ENCODE measurements at regions of chr20 and their contacts with region 1.

Region 1: GRCh38 chr20:49768204-49769047 is 44.2 kb upstream of the SLC9A8 start:
- DNase-seq: peak; percentile 91 to 100
- H3K4me3 ChIP-seq: no peak overlapping the region
- H3K27ac ChIP-seq: peak overlapping the region; percentile 96
- H3K4me1 ChIP-seq: peaks cover 93% of the 10 kb centered on the region
- H3K27me3 ChIP-seq: no peaks in the 10 kb centered on the region
- CTCF ChIP-seq: no peak

Region 2: GRCh38 chr20:49516916-49517789 is 251.3 kb before region 1 on chr20:
- CTCF ChIA-PET with region 1: no interaction called
- POLR2A ChIA-PET with region 1: no interaction called
- intact Hi-C with region 1: no loop called
- DNase-seq: peak in 1 of 2 experiments; percentile 35
- H3K4me3 ChIP-seq: no peak overlapping the region
- H3K27ac ChIP-seq: no peak overlapping the region
- H3K4me1 ChIP-seq: peaks cover 8% of the 10 kb centered on the region
- H3K27me3 ChIP-seq: peaks cover 14% of the 10 kb centered on the region; the same call in 1 of the 2 replicates
- CTCF ChIP-seq: no peak

Region 3: GRCh38 chr20:49699200-49699992 is 69.0 kb before region 1 on chr20:
- CTCF ChIA-PET with region 1: no interaction called
- POLR2A ChIA-PET with region 1: interaction called, 3 read pairs
- intact Hi-C with region 1: loop called (anchors 1 kb)
- DNase-seq: peak in 1 of 2 experiments; percentile 81
- H3K4me3 ChIP-seq: peak overlapping the region; percentile 19; the same call in 1 of the 2 replicates
- H3K27ac ChIP-seq: peak overlapping the region; percentile 99
- H3K4me1 ChIP-seq: peaks cover 97% of the 10 kb centered on the region
- H3K27me3 ChIP-seq: no peaks in the 10 kb centered on the region
- CTCF ChIP-seq: no peak

Region 4: DNA sequence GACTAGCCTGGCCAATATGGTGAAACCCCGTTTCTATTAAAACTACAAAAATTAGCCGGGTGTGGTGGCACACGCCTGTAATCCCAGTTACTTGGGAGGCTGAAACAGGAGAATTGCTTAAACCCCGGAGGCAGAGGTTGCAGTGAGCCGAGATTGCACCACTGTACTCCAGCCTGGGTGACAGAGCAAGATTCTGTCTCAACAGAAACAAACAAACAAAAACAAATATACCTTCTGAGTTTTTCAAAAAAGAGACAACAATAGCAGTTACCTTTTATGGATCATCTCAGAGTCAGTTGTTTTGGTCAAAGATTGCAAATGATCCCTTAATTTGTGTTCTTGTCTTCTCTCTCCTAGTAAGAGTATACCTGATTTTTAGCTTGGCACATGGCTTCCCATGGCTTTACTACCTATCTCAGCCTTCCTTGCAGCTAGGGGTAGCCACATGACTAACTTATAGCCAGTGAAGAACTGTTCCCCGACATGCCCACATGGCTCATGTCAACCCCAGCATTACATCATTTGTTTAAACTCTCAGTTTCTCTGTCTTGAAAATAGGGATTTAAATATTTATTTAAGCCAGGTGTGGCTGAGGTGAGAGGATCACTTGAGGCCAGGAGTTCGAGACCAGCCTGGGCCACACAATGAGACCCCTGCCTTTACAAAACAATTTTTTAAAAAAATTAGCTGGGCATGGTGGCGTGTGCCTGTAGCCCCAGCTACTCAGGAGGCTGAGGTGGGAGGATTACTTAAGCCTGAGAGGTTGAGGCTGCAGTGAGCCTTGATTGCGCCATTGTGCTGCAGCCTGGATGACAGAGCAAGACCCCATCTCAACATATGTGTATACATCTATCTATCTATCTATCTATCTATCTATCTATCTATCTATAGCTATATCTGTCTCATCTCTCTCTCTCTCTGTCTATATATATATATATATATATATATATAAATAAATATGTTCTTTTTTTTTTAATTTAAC is 19.2 kb after region 1 on chr20:
- CTCF ChIA-PET with region 1: no interaction called
- POLR2A ChIA-PET with region 1: no interaction called
- intact Hi-C with region 1: loop called (anchors 2 kb)
- DNase-seq: no peak
- H3K4me3 ChIP-seq: no peak overlapping the region
- H3K27ac ChIP-seq: peak overlapping the region; percentile 97
- H3K4me1 ChIP-seq: peaks cover 60% of the 10 kb centered on the region
- H3K27me3 ChIP-seq: no peaks in the 10 kb centered on the region
- CTCF ChIP-seq: no peak

Region 5: DNA sequence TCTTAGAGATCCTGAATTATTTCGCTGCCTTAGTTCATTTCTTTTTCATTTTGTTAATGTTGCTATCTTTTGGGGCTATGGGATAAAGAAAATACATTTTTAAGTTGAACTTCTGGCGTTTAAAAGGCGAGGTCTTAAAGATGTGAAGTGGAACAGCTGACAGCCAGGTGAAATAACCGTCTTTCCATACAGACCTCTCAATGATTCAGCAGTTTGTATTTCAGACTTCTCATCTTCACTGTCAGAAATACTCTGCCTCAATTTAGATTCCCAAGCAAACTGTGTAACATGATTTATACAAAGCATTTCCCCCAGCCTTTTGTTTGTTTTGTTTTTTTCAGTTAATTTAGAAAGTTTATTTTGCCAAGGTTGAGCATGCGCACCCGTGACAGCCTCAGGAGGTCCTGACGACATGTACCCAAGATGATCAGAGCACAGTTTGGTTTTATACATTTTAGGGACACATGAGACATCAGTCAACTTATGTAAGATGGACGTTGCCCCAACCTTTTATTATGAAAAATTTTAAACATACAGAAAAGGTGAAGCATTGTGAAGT is 84.2 kb after region 1 on chr20:
- CTCF ChIA-PET with region 1: no interaction called
- POLR2A ChIA-PET with region 1: interaction called, 26 read pairs
- intact Hi-C with region 1: no loop called
- DNase-seq: no peak
- H3K4me3 ChIP-seq: no peak overlapping the region
- H3K27ac ChIP-seq: peak overlapping the region; percentile 10; the same call in 1 of the 2 replicates
- H3K4me1 ChIP-seq: 0 out of 2 replicates have a peak, but pooled peaks cover 7% of the 10 kb centered on the region
- H3K27me3 ChIP-seq: no peaks in the 10 kb centered on the region
- CTCF ChIP-seq: no peak

Region 6: DNA sequence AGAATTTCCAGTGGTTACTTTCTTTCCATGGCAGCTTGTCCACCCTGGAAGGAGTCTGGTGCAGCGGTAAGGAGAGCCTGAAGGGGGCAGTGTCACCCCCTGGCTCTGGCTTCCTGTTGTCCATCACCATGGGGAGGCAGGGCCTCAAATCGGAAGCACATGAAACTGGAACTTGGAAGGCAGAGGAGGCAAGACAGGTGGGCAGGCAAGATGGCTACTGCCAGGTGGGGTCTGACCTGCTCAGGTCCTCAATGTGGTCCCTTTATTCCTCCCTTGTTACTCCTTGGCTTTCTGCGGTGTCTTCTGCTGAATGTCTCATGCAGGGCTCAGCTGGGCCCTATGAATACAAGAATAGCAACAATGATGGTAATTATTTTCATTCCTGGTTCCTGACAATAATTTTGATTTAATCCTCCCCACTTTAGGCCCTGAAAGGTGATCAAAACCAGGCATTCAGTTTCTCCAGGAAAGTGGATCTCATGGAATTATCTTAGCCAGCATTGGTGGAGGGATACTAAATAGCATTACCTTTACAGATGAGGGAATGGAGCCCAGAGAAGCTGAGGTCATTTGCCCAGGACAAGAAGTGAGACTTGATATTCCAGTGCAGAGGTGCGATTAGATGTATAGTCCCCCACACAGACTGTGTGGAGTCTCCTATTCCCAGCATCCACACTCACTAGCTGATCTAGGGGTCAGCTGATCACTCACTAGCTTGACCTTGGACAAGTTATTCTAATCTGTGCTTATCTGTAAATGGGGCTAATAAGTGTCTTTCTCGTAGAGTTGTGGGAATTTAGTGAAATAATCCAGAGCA is 196.7 kb after region 1 on chr20:
- CTCF ChIA-PET with region 1: no interaction called
- POLR2A ChIA-PET with region 1: no interaction called
- intact Hi-C with region 1: no loop called
- DNase-seq: peak; percentile 52 to 54
- H3K4me3 ChIP-seq: no peak overlapping the region
- H3K27ac ChIP-seq: no peak overlapping the region
- H3K4me1 ChIP-seq: peaks cover 25% of the 10 kb centered on the region
- H3K27me3 ChIP-seq: no peaks in the 10 kb centered on the region
- CTCF ChIP-seq: peak; percentile 76

Region 7: DNA sequence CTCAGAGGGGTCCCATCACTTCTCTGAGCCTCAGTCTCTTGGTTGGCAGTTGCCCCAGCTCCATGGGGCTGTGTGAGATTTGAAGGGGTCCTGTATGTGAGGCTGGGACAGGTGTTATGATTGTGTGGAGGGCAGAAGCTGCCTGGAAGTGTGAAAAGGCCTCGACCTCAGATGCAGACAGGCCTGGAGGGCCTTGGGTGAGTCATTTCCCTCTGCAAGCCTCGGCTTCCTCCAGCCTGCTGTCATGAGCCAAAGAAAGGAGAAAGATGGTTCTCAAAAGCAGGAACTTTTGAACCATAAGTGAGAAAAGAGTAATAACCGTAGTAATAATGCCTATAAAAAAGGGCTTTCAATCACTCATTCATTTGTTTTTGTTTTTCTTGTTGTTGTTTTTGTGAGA is 251.9 kb after region 1 on chr20:
- CTCF ChIA-PET with region 1: no interaction called
- POLR2A ChIA-PET with region 1: no interaction called
- intact Hi-C with region 1: no loop called
- DNase-seq: peak; percentile 25 to 69
- H3K4me3 ChIP-seq: no peak overlapping the region
- H3K27ac ChIP-seq: peak overlapping the region; percentile 33
- H3K4me1 ChIP-seq: peaks cover 27% of the 10 kb centered on the region
- H3K27me3 ChIP-seq: no peaks in the 10 kb centered on the region
- CTCF ChIP-seq: no peak

Region 8: GRCh38 chr20:50085452-50086365 is 317.3 kb after region 1 on chr20:
- CTCF ChIA-PET with region 1: no interaction called
- POLR2A ChIA-PET with region 1: no interaction called
- intact Hi-C with region 1: loop called (anchors 10 kb)
- DNase-seq: peak; percentile 43 to 66
- H3K4me3 ChIP-seq: peak overlapping the region; percentile 24; the same call in 1 of the 2 replicates
- H3K27ac ChIP-seq: peak overlapping the region; percentile 81
- H3K4me1 ChIP-seq: peaks cover 41% of the 10 kb centered on the region
- H3K27me3 ChIP-seq: no peaks in the 10 kb centered on the region
- CTCF ChIP-seq: peak; percentile 92

Measured in PC-9 (cell line).